ENCODE measurements at regions of chr14 and their contacts with region 1.

Region 1: DNA sequence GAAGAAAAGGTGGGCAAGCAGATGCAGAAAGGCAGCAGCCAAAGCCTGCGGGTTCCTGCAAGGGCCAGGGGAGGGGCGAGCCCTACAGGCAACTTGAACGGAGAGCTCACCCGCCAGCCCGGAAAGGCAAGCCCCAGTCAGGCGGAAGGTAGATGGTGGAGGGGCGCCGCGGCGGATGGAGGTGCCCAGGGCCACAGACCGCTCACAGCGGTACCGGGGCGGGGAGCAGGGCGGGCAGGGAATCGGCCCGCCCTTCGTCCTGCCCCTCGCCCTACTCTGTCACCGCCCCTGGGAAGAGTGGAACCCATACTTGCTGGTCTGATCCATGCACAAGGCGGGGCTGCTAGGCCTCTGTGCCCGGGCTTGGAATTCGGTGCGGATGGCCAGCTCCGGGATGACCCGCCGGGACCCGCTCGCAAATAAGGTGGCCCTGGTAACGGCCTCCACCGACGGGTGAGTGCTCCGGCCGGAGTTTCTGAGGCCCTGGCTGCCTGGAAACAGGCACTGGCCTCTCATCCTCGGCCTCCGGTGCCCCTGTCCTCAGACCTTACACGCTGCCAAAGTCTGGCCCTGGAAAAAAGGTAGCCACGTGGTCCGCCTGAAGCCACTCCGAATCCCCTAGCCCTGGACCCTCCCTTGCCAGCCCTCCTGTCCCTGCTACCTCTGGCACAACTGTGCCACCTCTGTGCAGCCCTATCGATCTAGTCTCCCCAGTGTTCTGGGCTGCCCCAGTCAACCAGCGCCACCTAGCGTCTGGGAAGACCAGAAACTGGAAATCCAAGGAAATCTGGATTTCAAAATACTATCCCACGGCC is at the start of gene DHRS4:
- DNase-seq: peak; percentile 63 to 84 (median 80)
- ATAC-seq: peak; percentile 94
- H3K4me3 ChIP-seq: peak within 1 kb of the TSS; percentile 77
- H3K4me3 Mint-ChIP-seq: peak within 1 kb of the TSS; percentile 94 to 100 (median 98)
- H3K27ac ChIP-seq: peak within 1 kb of the TSS; percentile 80
- H3K27ac Mint-ChIP-seq: peak within 1 kb of the TSS; percentile 70 to 94 (median 89)
- H3K4me1 ChIP-seq: peaks cover 8 to 17% of the 10 kb centered on the region in 2 donors
- H3K4me1 Mint-ChIP-seq: peaks cover 18 to 35% (median 27%) of the 10 kb centered on the region in 7 donors
- H3K27me3 ChIP-seq: no peaks in the 10 kb centered on the region
- H3K27me3 Mint-ChIP-seq: peaks cover 0 to 1% (median 0%) of the 10 kb centered on the region in 5 donors
- total RNA-seq, gene DHRS4: 7.8 to 19.9 (median 17.5) TPM

Region 2: GRCh38 chr14:23631702-23632460 is 321.8 kb before region 1 on chr14:
- CTCF ChIA-PET with region 1: interaction called, 3 read pairs
- POLR2A ChIA-PET with region 1: interaction called, 6 read pairs
- intact Hi-C with region 1: loop called in 1 of 2 experiments (anchors 2 kb)
- DNase-seq: peak; percentile 53 to 89 (median 76)
- ATAC-seq: peak; percentile 88
- H3K4me3 ChIP-seq: peak overlapping the region; percentile 16
- H3K4me3 Mint-ChIP-seq: peak overlapping the region; percentile 9 to 89 (median 77)
- H3K27ac ChIP-seq: peak overlapping the region; percentile 18
- H3K27ac Mint-ChIP-seq: peak overlapping the region in 8 of 9 donors; percentile 17 to 84 (median 60)
- H3K4me1 ChIP-seq: no peaks in the 10 kb centered on the region
- H3K4me1 Mint-ChIP-seq: peaks cover 5 to 18% (median 13%) of the 10 kb centered on the region in 7 donors
- H3K27me3 ChIP-seq: no peaks in the 10 kb centered on the region
- H3K27me3 Mint-ChIP-seq: peaks cover 0 to 2% (median 0%) of the 10 kb centered on the region in 5 donors

Region 3: DNA sequence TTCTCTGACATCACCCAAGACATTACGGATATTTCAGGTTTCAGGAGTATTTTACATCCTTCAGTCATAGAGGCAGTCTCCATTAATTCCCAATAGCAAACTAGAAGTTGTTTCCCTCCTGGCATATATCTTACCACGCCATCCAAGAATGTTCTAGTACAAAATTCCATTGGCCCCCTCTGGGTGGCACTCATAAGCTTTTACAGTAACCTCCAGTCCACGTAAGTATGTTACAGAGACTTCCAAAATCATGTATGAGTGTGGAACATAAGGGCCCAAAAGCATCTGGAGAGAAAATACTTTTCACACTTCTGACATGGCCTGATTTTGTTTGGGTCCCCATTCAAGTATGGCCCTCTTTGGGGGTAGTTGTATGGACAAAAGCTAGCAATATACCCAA is 58.2 kb before region 1 on chr14:
- CTCF ChIA-PET with region 1: no interaction called
- POLR2A ChIA-PET with region 1: no interaction called
- intact Hi-C with region 1: loop called in 1 of 2 experiments (anchors 1 kb)
- DNase-seq: no peak
- ATAC-seq: no peak
- H3K4me3 ChIP-seq: no peak overlapping the region
- H3K4me3 Mint-ChIP-seq: no peak overlapping the region
- H3K27ac ChIP-seq: no peak overlapping the region
- H3K27ac Mint-ChIP-seq: no peak overlapping the region
- H3K4me1 ChIP-seq: no peaks in the 10 kb centered on the region
- H3K4me1 Mint-ChIP-seq: peaks cover 0 to 3% (median 0%) of the 10 kb centered on the region in 7 donors
- H3K27me3 ChIP-seq: peaks cover 0 to 6% of the 10 kb centered on the region in 2 donors
- H3K27me3 Mint-ChIP-seq: peaks cover 2 to 25% (median 12%) of the 10 kb centered on the region in 5 donors

Region 4: DNA sequence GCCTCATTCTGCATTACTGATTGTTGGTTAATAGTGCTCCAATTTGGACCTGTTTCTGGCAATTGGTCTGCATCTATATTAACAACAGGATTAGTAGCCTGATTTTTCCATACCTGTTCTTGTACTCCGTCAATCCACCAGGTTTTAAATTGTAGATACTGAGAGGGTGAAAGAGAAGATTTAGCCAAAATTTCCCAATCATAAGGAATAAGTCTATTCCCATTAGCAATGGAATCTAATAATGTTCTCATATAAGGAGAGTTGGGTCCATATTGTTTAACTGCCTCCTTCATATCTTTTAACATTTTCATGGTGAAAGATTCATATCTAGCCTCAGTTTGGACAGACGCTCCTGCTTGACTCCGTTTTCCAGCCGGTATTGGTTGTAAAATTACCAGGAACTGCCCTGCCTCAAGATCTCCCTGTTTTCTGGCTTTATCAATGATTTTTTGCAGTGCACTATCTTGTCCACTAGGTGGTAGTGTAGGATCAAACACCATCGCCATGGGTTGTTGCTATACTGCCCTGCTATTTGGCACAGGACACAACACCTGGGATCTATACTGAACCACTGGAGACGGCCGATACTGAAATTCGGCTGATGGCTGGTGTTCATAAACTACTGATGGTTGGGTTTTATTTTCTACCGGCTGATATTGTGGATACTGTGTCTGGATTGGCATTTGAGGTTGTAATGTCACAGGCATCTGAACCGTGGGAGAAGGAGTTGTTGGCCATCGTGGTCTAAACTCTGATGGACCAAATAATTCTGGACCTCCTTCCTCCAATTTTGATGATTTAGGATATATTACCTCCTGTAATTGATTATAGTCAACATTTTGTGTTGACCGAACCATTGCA is 60.2 kb after region 1 on chr14:
- CTCF ChIA-PET with region 1: interaction called, 3 read pairs
- POLR2A ChIA-PET with region 1: no interaction called
- intact Hi-C with region 1: loop called in 1 of 2 experiments (anchors 10 kb)
- DNase-seq: peak in 8 of 9 donors; percentile 17 to 76 (median 67)
- ATAC-seq: peak; percentile 94
- H3K4me3 ChIP-seq: no peak overlapping the region
- H3K4me3 Mint-ChIP-seq: no peak overlapping the region
- H3K27ac ChIP-seq: no peak overlapping the region
- H3K27ac Mint-ChIP-seq: no peak overlapping the region
- H3K4me1 ChIP-seq: peaks cover 0 to 6% of the 10 kb centered on the region in 2 donors
- H3K4me1 Mint-ChIP-seq: peaks cover 8 to 28% (median 25%) of the 10 kb centered on the region in 7 donors
- H3K27me3 ChIP-seq: no peaks in the 10 kb centered on the region
- H3K27me3 Mint-ChIP-seq: peaks cover 0 to 15% (median 0%) of the 10 kb centered on the region in 5 donors

Measured in naive thymus-derived CD4-positive, alpha-beta T cell (primary cell).